ENCODE measurements at regions of chr6 and their contacts with region 1.

Region 1: DNA sequence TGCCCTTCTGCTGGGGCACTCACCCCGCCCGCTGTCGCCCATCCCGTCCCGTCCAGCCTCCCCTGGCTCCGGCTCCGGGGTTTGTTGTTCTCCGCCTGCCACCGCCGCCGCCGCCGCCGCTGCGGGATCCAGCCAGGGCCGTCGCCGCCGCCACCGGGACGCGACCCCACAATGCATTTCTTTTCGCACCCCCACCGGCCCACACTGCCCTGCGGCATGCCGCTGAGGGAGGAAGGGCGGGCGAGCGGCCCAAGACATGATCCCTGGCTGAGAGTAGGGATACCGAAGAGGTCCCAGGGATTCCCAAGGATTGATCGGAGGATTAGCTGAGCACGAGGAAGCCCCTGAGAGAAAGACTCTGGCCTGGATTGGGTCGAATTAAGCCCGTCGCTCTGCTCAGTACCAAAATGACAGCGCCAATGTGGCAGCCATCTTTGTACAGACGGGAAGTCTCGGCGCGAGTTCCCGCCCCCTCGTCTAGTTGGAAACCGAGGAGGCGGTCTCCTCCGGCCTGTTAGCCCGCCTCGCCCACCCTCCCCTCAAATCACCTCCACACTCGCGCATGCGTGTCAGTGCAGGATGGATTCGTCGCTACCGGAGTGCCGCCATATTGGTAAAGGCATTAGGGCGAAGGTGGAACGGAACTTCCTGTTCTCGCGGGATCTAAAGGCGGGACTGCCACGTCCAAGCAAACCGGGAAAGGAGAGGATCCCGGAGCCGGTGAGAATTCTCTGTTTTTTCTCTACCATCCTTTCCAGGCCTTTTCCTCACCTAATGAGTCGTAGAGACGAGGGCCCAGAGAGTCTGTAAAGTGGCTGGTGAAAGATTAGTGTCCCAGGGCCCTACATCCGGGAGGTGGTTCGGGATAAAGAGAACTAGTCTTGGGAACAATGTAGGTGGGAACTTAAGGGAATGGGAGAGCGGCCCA is at the starts of genes RXRB and SLC39A7:
- DNase-seq: peak; percentile 100
- H3K4me3 Mint-ChIP-seq: peak within 1 kb of the TSS; percentile 98
- H3K27ac Mint-ChIP-seq: peak within 1 kb of the TSS; percentile 97
- H3K4me1 Mint-ChIP-seq: peaks cover 60% of the 10 kb centered on the region
- H3K27me3 Mint-ChIP-seq: no peaks in the 10 kb centered on the region
- total RNA-seq, gene RXRB: 50.4 to 50.6 TPM
- total RNA-seq, gene SLC39A7: 35.9 to 39.5 TPM

Region 2: DNA sequence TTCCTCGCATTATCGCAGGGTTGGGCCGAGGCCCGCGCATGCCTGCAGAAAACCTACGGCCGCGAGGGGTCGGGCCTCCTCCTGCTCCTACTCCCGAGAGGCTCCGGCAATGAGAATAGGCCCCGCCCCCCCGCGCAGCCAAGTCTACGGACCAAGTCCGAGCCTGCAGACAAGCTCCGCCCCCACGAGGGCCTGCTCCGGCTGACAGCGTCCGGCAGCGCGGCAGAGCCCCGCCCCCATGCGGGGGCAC is 1004.9 kb before region 1 on chr6:
- CTCF ChIA-PET with region 1: no interaction called
- intact Hi-C with region 1: loop called (anchors 10 kb)
- DNase-seq: peak; percentile 100
- H3K4me3 Mint-ChIP-seq: peak overlapping the region; percentile 97
- H3K27ac Mint-ChIP-seq: peak overlapping the region; percentile 95
- H3K4me1 Mint-ChIP-seq: peaks cover 36% of the 10 kb centered on the region
- H3K27me3 Mint-ChIP-seq: no peaks in the 10 kb centered on the region

Region 3: DNA sequence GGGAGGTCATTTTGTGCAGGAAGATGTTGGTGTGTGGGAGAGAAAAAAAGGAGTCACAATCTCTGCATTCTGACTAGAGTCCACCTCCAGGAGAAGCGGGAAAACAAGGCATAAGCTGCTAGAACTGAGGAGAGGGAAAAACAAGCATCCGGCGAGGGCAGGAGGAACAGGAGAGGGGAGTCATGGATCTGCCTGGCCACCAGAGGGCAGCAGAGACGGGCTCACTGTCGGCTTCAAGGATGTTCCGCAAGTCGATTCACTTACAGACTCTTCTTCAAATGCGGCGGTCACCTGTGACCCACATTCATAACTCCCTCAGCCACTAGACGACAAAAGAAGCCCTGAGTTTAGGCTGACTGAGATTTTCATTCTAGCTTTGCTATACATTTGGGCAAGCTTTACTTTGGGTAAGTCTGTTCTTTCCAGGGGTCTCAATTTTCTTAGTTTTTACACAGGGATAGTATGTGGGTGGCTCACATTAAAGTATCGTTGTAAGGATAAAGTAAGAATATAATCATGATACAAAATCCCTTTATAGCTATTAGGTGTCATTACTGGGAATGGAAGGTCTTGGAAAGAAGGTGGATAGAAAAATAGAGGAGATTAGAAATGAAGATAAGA is 786.9 kb before region 1 on chr6:
- CTCF ChIA-PET with region 1: no interaction called
- intact Hi-C with region 1: no loop called
- DNase-seq: peak; percentile 92
- H3K4me3 Mint-ChIP-seq: no peak overlapping the region
- H3K27ac Mint-ChIP-seq: no peak overlapping the region
- H3K4me1 Mint-ChIP-seq: peaks cover 2% of the 10 kb centered on the region
- H3K27me3 Mint-ChIP-seq: peaks cover 29% of the 10 kb centered on the region

Region 4: DNA sequence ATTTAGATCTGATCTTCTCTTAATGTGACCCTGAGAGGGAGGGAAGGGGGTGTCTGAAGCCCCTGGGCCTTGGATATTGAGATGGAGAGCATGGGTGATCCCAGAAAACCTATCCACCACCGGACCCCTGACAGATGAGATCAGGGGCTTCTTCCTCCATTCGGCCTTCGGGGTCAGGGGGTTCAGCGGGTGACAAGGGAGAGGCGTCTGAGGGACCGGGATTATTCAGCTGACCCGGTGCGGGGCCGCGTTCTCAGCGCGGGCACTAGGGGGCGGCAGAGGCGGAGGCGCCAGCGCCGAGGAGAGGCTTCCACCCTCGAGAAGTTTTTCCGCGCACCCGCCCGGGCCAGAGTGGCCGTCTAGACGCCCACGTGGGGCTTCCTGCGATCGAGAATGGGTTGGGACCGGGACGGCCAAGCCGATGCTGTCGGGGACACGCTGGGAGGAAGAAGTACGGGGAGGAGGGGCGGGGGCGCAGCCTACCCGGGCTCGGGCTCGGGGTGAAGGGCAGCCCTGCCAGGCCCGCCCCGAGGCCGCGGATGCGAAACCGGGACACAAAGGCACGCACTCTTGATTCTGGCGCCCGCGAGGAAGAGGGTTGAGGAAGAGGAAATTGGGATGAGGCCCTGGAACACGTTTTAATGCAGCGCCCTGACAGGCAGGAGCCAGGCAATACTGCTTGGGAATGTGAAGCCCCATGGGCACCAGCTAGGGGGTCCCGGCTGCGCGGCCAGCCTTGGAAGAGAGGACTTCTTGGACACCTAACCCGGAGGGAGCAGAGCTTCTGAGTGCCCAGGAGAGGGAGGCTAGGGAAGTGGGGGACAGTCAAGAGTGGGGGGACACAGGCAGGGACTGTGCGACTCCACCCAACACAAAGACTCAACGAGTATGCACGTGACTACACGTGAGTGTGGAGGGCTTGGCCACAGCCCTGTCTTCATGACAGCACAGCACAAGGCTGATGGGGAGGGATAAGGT is 38.8 kb before region 1 on chr6:
- CTCF ChIA-PET with region 1: interaction called, 21 read pairs
- intact Hi-C with region 1: loop called (anchors 1 kb)
- DNase-seq: peak; percentile 85
- H3K4me3 Mint-ChIP-seq: peak overlapping the region; percentile 78
- H3K27ac Mint-ChIP-seq: no peak overlapping the region
- H3K4me1 Mint-ChIP-seq: peaks cover 12% of the 10 kb centered on the region
- H3K27me3 Mint-ChIP-seq: no peaks in the 10 kb centered on the region

Region 5: GRCh38 chr6:33172688-33173534 is 27.6 kb before region 1 on chr6:
- CTCF ChIA-PET with region 1: no interaction called
- intact Hi-C with region 1: no loop called
- DNase-seq: no peak
- H3K4me3 Mint-ChIP-seq: no peak overlapping the region
- H3K27ac Mint-ChIP-seq: no peak overlapping the region
- H3K4me1 Mint-ChIP-seq: no peaks in the 10 kb centered on the region
- H3K27me3 Mint-ChIP-seq: no peaks in the 10 kb centered on the region

Region 6: GRCh38 chr6:33299237-33299944 is 98.9 kb after region 1 on chr6:
- CTCF ChIA-PET with region 1: no interaction called
- intact Hi-C with region 1: loop called (anchors 1 kb)
- DNase-seq: peak; percentile 96
- H3K4me3 Mint-ChIP-seq: peak overlapping the region; percentile 85
- H3K27ac Mint-ChIP-seq: peak overlapping the region; percentile 98
- H3K4me1 Mint-ChIP-seq: peaks cover 29% of the 10 kb centered on the region
- H3K27me3 Mint-ChIP-seq: no peaks in the 10 kb centered on the region

Region 7: DNA sequence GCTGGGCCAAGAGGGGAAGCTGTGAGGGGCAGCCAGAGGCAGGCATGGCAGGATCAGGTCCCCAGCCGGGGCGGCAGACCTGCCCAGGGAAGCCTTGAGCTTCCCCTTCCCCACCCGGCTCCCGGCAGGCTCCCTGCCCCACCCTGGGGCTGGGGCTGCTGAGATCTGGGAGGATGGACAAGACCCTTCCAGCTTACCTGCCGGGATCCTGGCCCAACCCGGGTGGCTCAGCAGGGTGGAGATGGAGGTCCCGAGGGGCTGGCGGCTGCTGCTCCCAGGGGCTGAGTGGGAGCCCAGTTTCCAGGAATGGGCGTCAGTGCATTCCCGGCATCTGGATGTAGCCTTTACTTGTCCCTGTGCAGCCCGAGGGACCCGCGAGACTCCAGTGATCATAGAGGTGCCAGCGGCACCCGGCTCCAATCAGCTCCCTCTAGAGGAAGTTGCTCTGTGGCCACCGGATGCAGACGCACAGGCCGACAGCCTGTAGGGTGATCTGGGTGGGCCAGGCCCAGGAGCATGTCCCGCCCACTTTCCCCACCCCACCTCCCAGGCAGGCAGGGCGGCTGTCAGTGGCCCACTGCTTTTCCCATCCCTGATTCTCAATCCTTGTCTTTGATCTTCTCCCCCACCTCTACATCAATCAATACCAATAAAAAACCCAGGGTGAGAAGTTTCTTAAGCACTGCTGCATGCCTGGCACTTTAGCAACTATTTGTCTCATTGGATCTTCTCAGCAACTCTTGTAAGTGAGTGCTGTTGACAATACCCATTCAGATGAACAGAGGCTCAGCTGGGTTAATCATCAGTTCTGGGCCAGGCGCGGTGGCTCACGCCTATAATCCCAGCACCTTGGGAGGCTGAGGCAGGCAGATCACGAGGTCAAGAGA is 379.6 kb after region 1 on chr6 and contains the start of gene BAK1:
- CTCF ChIA-PET with region 1: no interaction called
- intact Hi-C with region 1: loop called (anchors 10 kb)
- DNase-seq: peak; percentile 92
- H3K4me3 Mint-ChIP-seq: peak within 1 kb of the TSS; percentile 86
- H3K27ac Mint-ChIP-seq: peak within 1 kb of the TSS; percentile 96
- H3K4me1 Mint-ChIP-seq: peaks cover 35% of the 10 kb centered on the region
- H3K27me3 Mint-ChIP-seq: no peaks in the 10 kb centered on the region
- total RNA-seq, gene BAK1: 38.3 to 41.1 TPM